Pancreas (tissue), 10 donors: ENCODE measurements at regions of chr3 and their contacts with region 1.

Region 1: GRCh38 chr3:149129326-149130205 is at the start of gene HPS3:
- DNase-seq: peak; percentile 88 to 95 (median 92)
- ATAC-seq: peak; percentile 97 to 99 (median 98)
- H3K4me3 ChIP-seq: peak within 1 kb of the TSS; percentile 70 to 89 (median 82)
- H3K27ac ChIP-seq: peak within 1 kb of the TSS; percentile 81 to 84 (median 81)
- H3K4me1 ChIP-seq: peaks cover 13 to 19% (median 17%) of the 10 kb centered on the region in 3 donors
- H3K27me3 ChIP-seq: no peaks in the 10 kb centered on the region
- CTCF ChIP-seq: no peak
- total RNA-seq, gene HPS3: 6.1 to 18.1 (median 9.1) TPM

Region 2: GRCh38 chr3:149267565-149267964 is 138.0 kb after region 1 on chr3:
- intact Hi-C with region 1: loop called in 1 of 3 experiments (anchors 10 kb)
- DNase-seq: no peak
- ATAC-seq: no peak
- H3K4me3 ChIP-seq: no peak overlapping the region
- H3K27ac ChIP-seq: no peak overlapping the region
- H3K4me1 ChIP-seq: no peaks in the 10 kb centered on the region
- H3K27me3 ChIP-seq: no peaks in the 10 kb centered on the region
- CTCF ChIP-seq: no peak